ENCODE measurements at regions of chr15 and their contacts with region 1.

Region 1: DNA sequence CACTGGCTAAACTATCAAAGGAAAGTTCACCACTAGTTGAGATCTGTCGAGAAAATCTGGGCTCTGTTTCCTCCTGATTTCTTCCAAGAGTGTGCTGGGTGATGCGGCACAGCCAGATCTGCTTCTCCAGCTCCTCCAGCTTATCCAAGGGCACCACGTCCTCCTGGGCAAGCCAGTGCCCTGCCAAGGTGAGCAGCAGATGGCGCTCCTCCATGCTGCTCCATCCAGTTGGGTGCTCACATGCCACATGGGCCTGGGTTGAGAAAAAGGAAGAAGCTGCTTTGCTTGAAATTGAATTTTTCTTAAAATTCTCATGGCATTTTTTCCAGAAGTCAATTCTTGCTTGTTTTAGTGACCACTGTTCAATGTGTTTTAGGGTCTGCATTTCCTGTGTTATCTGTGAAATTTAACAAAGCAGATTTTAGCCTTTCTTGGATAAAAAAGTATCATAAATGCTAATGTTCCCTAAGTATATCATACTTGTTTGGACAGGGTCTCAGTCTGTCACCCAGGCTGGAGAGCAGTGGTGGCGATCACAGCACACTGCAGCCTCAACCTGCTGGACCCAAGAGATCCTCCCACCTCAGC is 47.3 kb downstream of the EIF3J start:
- DNase-seq: peak; percentile 21 to 70
- H3K4me3 ChIP-seq: no peak overlapping the region
- H3K27ac ChIP-seq: no peak overlapping the region
- H3K4me1 ChIP-seq: no peaks in the 10 kb centered on the region
- H3K27me3 ChIP-seq: no peaks in the 10 kb centered on the region
- CTCF ChIP-seq: peak; percentile 69 to 88 (median 75)
- EP300 ChIP-seq: no peak
- POLR2A ChIP-seq: no peak
- RAD21 ChIP-seq: peak; percentile 54 to 69

Region 2: DNA sequence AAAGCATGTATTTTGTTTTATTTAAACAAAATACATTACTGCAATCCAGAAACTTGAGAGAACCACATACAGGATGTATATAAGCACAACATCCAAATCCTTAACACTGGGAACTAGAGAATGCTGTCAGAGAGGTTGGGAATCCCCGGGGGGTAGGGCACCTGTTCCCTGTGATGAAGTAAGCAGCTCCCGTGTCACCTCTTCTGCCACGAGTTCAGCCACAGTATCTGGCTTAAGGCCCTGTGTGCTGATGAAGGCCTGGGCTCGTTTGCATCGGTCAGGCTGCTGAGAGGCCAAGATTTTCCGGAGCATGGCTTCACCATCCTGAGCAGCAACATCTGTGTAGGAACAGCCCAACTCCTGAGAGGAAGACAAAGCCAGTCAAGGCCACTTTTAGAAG is 10.9 kb before region 1 on chr15:
- CTCF ChIA-PET with region 1: interaction called, 33 read pairs
- POLR2A ChIA-PET with region 1: interaction called, 4 read pairs
- DNase-seq: no peak
- H3K4me3 ChIP-seq: no peak overlapping the region
- H3K27ac ChIP-seq: no peak overlapping the region
- H3K4me1 ChIP-seq: no peaks in the 10 kb centered on the region
- H3K27me3 ChIP-seq: no peaks in the 10 kb centered on the region
- CTCF ChIP-seq: no peak
- EP300 ChIP-seq: no peak
- POLR2A ChIP-seq: no peak
- RAD21 ChIP-seq: no peak

Region 3: GRCh38 chr15:44706946-44707636 is 122.8 kb after region 1 on chr15:
- CTCF ChIA-PET with region 1: no interaction called
- POLR2A ChIA-PET with region 1: no interaction called
- DNase-seq: no peak
- H3K4me3 ChIP-seq: no peak overlapping the region
- H3K27ac ChIP-seq: no peak overlapping the region
- H3K4me1 ChIP-seq: no peaks in the 10 kb centered on the region
- H3K27me3 ChIP-seq: peaks cover 0 to 4% (median 3%) of the 10 kb centered on the region in 4 experiments; a peak in 5 of 7 replicates
- CTCF ChIP-seq: no peak
- EP300 ChIP-seq: no peak
- POLR2A ChIP-seq: no peak
- RAD21 ChIP-seq: no peak

Region 4: DNA sequence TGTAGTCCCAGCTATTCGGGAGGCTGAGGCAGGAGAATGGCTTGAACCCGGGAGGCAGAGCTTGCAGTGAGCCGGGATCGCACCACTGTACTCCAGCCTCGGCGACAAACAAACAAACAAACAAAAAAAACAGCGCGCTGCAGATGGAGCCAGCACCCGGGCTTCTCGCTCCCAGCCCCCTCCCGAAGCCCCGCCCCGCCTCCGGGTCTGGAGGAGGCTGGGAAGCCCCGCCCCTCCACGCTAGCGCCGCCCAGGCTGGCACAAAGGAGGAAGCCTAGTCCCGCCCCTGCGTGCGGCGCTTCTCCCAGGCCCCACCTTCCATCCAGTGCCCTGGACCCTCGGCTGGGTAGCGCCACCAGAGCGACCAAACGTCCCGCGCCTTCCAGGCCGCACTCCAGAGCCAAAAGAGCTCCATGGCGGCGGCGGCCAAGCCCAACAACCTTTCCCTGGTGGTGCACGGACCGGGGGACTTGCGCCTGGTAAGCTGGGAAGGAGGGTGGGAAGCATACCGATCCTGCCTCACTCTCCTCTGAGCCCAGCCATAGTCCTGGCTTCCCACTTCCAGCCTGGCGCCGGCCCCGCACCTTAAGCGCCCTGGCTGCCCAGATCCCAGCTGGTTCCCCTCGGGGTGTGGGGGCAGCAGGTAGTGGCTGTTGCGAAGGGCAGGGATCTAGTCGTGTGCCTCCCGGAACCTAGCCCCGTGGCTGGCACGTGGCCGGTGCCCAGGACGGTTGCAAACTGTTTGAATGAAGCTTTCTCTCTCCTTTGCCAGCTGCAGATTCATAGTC is 438.8 kb after region 1 on chr15 and contains the start of gene SORD:
- CTCF ChIA-PET with region 1: no interaction called
- POLR2A ChIA-PET with region 1: no interaction called
- DNase-seq: peak; percentile 87 to 99
- H3K4me3 ChIP-seq: peak within 1 kb of the TSS; percentile 64 to 92 (median 72)
- H3K27ac ChIP-seq: peak within 1 kb of the TSS; percentile 72; the same call in 1 of the 2 replicates
- H3K4me1 ChIP-seq: peaks cover 5 to 10% (median 8%) of the 10 kb centered on the region in 4 experiments
- H3K27me3 ChIP-seq: no peaks in the 10 kb centered on the region; a peak in 1 of 7 replicates
- CTCF ChIP-seq: no peak
- EP300 ChIP-seq: no peak
- POLR2A ChIP-seq: peak; percentile 84 to 94
- RAD21 ChIP-seq: no peak
- total RNA-seq, gene SORD: 75.8 TPM in 2 replicates

Measured in H1 (cell line).